ENCODE measurements at regions of chr3 and their contacts with region 1.

Region 1: GRCh38 chr3:124559881-124560574 is 170.2 kb upstream of the UMPS start:
- DNase-seq: peak; percentile 52 to 75 (median 63)
- H3K4me3 ChIP-seq: no peak overlapping the region
- H3K27ac ChIP-seq: no peak overlapping the region
- H3K4me1 ChIP-seq: peaks cover 2% of the 10 kb centered on the region
- H3K27me3 ChIP-seq: no peaks in the 10 kb centered on the region
- CTCF ChIP-seq: peak; percentile 22 to 74 (median 73)
- EP300 ChIP-seq: no peak
- POLR2A ChIP-seq: no peak

Region 2: GRCh38 chr3:124158369-124158881 is 401.6 kb before region 1 on chr3:
- intact Hi-C with region 1: no loop called
- DNase-seq: no peak
- H3K4me3 ChIP-seq: no peak overlapping the region
- H3K27ac ChIP-seq: no peak overlapping the region
- H3K4me1 ChIP-seq: no peaks in the 10 kb centered on the region
- H3K27me3 ChIP-seq: no peaks in the 10 kb centered on the region
- CTCF ChIP-seq: no peak
- EP300 ChIP-seq: no peak
- POLR2A ChIP-seq: no peak

Region 3: GRCh38 chr3:124492811-124493210 is 67.2 kb before region 1 on chr3:
- intact Hi-C with region 1: loop called in 1 of 4 experiments (anchors 10 kb)
- DNase-seq: peak in 1 of 5 donors; percentile 19
- H3K4me3 ChIP-seq: no peak overlapping the region
- H3K27ac ChIP-seq: no peak overlapping the region
- H3K4me1 ChIP-seq: no peaks in the 10 kb centered on the region
- H3K27me3 ChIP-seq: no peaks in the 10 kb centered on the region
- CTCF ChIP-seq: no peak
- EP300 ChIP-seq: no peak
- POLR2A ChIP-seq: no peak

Region 4: DNA sequence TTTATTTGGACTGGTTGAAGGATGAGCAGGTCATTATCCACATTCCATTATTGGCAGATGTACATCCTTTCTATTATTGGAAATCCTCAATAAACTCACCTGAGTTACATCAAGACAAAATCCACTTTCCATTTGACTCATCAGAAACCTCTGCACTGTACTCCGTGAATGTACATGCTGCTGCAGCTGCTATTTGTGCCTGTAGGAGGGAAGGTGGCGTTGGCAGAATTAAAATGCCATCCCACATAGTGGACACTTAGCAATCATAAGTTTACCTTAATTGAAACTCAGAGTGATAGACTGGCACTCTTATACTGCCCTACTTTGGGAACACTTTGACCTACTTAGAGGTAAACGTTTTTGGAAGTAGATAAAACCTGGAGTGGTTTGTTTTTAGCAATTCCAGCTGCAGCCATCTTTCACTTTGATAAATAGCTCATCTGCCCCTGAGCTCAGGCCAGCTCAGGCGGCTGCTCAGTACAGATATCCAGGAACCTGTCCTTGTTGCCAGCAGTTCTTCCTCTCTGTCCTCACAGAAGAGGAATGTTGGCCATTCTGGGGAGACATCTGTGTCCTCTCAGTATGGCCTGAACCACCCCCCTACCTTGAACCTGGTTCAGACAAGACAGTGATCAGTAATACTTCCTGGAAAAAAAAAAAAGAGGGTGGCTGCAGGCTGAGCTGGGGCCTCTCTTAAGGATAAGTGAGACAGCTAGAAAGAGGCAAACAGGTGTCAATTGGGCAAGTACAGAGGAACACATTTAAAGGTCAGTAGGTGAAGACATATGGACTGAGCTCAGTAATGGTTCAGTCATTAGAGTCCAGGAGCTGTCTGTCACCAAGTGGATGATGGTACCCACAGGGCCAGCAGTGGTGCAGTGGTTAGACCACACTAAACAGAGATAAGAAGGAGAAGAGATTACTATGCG is 16.8 kb after region 1 on chr3:
- intact Hi-C with region 1: no loop called
- DNase-seq: no peak
- H3K4me3 ChIP-seq: no peak overlapping the region
- H3K27ac ChIP-seq: no peak overlapping the region
- H3K4me1 ChIP-seq: no peaks in the 10 kb centered on the region
- H3K27me3 ChIP-seq: no peaks in the 10 kb centered on the region
- CTCF ChIP-seq: no peak
- EP300 ChIP-seq: no peak
- POLR2A ChIP-seq: no peak

Region 5: GRCh38 chr3:124688581-124689454 is 128.8 kb after region 1 on chr3:
- intact Hi-C with region 1: loop called (anchors 5 to 10 kb)
- DNase-seq: peak; percentile 44 to 70 (median 65)
- H3K4me3 ChIP-seq: no peak overlapping the region
- H3K27ac ChIP-seq: no peak overlapping the region
- H3K4me1 ChIP-seq: no peaks in the 10 kb centered on the region
- H3K27me3 ChIP-seq: no peaks in the 10 kb centered on the region
- CTCF ChIP-seq: peak; percentile 13 to 50 (median 40)
- EP300 ChIP-seq: no peak
- POLR2A ChIP-seq: no peak

Region 6: DNA sequence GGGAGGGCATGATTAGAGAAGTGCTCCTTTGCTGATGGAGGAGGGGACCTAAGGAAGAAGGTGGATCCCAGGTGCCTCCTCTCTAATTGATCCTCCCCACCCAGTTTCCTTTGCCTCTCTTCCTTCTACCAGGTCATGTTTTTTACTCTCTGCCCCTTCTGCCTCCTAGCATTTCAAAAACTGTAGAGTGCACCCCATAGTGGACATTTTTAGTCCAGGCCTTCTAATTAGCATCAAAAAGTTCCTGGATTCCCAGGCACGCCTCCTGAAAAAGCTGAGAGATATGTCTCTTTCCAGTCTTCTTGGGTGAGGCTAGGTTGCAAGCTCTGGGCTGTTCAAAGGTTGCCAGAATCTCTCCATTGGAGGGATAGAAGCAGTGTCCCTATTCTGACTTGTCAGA is 345.8 kb after region 1 on chr3:
- intact Hi-C with region 1: loop called in 2 of 4 experiments (anchors 5 to 10 kb)
- DNase-seq: no peak
- H3K4me3 ChIP-seq: no peak overlapping the region
- H3K27ac ChIP-seq: no peak overlapping the region
- H3K4me1 ChIP-seq: peaks cover 1% of the 10 kb centered on the region
- H3K27me3 ChIP-seq: no peaks in the 10 kb centered on the region
- CTCF ChIP-seq: no peak
- EP300 ChIP-seq: no peak
- POLR2A ChIP-seq: no peak

Measured in ovary (tissue), 10 donors.